ENCODE measurements at regions of chr19 and their contacts with region 1.

Region 1: DNA sequence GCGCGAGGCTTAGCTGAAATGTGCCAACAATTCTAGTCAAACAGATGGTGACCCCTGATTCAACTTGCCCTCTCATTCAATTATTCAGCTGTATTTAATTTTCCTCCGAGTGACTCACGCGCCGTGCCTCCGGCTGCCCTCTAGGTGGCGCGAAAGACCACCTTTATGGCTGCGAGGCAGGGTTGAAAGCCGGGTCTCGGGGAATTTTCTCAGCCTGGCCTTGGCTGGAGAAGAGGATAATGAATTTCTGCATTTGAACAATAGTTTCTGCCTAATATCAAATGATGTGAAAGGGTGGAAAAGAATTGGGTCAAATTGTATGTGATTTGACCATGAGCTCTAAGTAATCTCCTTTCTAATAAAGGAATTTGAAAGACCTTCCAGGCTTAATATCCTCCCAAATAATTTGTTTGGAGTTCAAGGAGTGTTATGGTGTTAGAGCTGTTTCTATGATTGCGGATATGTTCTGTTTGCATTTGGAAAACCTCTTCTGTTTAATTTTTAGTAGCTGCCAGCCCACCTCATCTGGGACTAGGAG is 310.9 kb downstream of the ZNF536 start:
- DNase-seq: peak; percentile 79
- ATAC-seq: peak; percentile 84

Region 2: DNA sequence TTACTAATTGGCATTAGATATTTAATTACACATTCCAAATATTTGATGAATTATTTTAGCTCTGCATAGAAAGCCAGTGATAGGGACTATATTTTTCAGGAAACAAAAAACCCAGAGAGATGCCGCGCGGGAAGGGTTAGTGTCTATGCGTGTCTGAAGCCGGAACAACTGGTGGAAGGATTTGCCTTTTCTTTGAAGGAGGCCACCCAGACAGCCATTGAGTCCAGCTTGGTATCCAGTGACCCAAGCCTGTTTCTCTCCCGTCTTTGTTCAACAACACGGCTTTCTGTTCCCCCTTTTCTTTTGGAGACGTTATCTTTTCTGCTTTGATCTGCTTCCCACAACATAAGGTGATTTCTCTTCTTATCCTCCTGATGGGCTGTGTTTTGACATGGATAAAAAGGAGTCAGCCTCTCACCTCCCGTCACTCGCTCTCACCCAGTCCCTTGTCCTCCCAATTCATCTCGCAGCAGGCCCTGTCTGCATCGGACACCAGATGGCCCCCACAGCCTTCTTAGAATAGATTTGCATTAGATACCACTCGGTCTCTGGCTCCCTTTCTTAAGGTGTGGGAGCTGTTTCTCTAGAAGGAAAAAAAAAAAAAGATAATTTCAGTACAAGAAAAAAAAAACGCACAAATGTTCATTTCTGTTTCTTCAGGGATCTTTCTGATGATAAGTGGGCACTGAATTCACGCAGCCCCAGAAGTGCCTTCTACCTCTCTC is 50.9 kb after region 1 on chr19:
- intact Hi-C with region 1: no loop called
- DNase-seq: no peak
- ATAC-seq: no peak

Region 3: GRCh38 chr19:31350701-31351068 is 667.6 kb after region 1 on chr19:
- intact Hi-C with region 1: loop called (anchors 10 kb)
- DNase-seq: peak; percentile 75
- ATAC-seq: peak; percentile 44

Region 4: DNA sequence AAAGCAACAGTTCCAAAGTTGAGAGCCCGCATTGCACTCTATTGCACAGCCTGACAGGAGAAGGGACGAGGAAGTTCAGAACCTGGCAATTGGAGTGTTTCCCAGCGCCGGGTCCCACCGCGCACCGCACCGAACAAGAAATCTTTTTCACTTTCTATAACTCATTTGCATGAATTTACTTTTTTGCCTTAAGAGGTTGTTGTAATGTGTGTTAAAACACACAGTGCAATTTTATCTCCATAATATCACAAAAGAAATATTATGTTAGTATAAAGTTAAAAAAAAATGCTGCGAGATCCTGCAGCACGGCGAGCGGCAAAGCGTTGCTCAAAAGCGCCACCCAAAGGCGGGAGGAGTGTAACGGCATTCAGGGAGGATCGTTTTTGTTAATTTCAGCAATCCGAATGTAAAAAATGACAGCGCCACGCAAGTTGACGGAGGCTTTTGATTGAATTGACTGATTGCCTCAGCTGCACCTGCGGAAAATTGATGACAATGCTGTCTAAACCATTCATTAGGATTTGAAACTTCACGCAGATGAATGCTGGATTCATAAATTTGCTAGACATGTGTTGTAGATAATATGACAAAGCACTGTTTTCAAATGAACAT is 1358.7 kb after region 1 on chr19:
- intact Hi-C with region 1: loop called (anchors 10 kb)
- DNase-seq: peak; percentile 45
- ATAC-seq: peak; percentile 53

Region 5: DNA sequence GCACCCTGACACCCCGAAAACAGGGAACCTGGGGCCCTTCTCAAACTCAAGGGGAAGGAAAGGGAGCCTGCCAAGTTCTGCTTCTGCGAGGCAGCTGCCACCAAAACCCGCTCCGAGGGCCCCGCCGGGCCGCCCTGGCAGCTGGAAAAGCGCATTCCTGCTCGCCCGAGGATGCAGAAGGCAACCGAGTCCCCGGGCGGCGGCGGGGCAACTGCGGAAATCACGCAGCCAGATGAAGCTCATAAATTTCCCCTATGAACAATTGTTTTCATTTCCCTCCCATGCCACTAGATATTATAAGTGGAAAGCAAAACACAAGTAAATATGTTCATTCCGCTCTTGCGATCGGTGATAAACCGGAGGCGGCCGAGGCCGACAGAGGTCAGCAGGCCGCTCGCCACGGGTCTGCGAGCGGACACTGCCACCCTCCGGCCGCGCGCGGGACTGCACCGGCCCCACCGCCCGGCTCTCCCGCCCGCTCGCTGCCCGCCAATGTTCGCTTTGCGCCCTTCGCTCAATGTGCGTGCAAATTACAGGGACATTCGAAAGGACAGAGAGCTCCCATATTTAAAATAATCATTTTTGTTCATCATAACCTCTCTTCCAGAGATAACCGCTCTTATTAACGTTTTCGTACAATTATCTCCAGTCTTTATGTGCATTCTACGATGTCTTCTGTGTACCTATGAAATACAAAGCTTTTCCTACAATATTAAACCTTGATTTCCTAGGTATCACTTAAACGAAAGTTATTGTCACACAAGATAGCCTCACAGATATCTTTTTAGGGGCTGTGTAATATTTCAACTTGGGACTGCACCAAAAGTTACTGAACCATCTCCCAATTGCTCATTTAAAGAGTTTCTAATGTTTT is 1541.5 kb after region 1 on chr19:
- intact Hi-C with region 1: loop called (anchors 5 kb)
- DNase-seq: peak; percentile 74
- ATAC-seq: peak; percentile 98

Measured in Right ventricle myocardium superior (tissue), 1 donor.